CD8-positive, alpha-beta T cell (primary cell): ENCODE measurements at regions of chr3 and their contacts with region 1.

Region 1: DNA sequence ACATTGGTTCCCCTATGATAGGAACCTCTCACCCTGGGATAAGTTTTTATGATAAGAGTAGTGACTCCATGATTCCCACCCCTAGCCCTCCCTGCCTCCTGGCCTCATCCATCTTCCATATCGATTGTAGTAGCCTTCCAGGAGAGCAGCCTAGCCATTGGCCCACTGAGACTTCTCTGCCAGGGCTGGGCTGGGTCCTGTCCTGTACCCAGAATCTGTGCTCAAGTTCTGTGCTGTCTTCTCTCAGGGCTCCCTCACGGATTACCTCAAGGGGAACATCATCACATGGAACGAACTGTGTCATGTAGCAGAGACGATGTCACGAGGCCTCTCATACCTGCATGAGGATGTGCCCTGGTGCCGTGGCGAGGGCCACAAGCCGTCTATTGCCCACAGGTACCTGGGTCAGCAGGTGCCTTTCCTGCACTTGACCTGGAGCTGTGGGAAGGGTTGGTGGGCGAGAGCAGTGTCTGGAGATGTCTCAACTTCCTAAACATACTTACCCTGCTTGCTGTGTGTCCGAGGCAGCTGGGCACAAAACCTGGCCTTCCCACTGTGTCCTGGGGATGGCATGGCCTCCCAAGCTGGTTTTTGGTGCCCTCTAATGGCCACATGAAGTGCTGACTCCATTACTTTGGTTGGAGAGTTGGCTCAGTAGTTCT is 16.6 kb upstream of the EXOG start:
- DNase-seq: peak in 7 of 9 experiments; percentile 18 to 72 (median 48)
- ATAC-seq: peak; percentile 55
- H3K4me3 ChIP-seq: no peak overlapping the region
- H3K4me3 Mint-ChIP-seq: no peak overlapping the region
- H3K27ac ChIP-seq: no peak overlapping the region
- H3K27ac Mint-ChIP-seq: no peak overlapping the region
- H3K4me1 ChIP-seq: no peaks in the 10 kb centered on the region
- H3K4me1 Mint-ChIP-seq: peaks cover 2% of the 10 kb centered on the region
- H3K27me3 ChIP-seq: no peaks in the 10 kb centered on the region
- H3K27me3 Mint-ChIP-seq: no peaks in the 10 kb centered on the region
- CTCF ChIP-seq: peak; percentile 75

Region 2: GRCh38 chr3:37855363-37855970 is 624.1 kb before region 1 on chr3:
- CTCF ChIA-PET with region 1: interaction called, 3 read pairs
- POLR2A ChIA-PET with region 1: no interaction called
- intact Hi-C with region 1: loop called in 1 of 2 experiments (anchors 5 kb)
- DNase-seq: peak; percentile 41 to 85 (median 70)
- ATAC-seq: peak; percentile 57
- H3K4me3 ChIP-seq: no peak overlapping the region
- H3K4me3 Mint-ChIP-seq: no peak overlapping the region
- H3K27ac ChIP-seq: no peak overlapping the region
- H3K27ac Mint-ChIP-seq: no peak overlapping the region
- H3K4me1 ChIP-seq: peaks cover 8% of the 10 kb centered on the region
- H3K4me1 Mint-ChIP-seq: peaks cover 3% of the 10 kb centered on the region
- H3K27me3 ChIP-seq: no peaks in the 10 kb centered on the region
- H3K27me3 Mint-ChIP-seq: peaks cover 5% of the 10 kb centered on the region
- CTCF ChIP-seq: peak; percentile 86

Region 3: DNA sequence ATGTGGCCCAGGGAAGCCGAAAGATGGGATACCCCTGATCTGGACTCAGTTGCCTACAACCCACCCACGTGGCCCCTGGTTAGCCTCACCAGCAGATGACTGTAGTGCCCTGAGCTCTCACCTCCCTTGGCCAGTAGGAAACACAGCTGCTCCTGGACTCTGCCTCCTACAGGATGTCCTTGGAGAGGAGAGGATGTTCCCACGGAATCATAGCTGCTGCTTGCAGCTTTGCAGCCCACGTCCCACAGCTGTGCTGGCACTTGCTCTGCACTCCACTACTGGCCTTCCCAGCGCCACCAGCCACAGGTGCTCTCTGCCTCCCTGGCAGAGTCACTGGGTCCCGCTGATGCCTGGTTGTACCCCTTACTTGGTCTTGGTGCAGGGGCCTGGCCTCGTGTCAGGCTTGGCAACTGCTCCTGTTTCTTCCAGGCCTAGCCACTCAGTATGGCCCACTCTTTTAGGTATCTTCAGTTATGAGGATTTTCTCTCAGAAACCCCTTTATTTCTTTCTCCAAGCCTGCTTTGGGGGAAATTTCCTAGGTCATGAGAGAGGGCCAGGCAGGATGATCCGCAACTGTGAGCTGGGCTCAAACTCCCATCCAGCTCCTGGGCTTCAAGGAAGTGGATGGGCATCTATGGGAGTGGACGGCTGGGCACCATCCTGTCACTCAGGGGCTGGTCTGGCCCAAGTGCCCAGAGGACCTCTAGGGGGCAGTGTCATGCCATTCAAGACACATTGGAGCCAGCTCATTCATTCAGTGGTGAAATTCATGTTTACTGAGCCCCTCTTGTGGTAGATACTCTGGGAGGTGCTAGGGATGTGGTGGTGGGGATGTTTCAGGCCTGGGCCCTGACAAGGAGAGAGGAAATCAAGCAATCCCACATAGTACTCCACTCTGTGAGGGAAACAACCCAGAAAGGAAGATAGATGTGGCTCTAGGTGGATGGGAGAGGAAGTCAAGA is 505.2 kb before region 1 on chr3:
- CTCF ChIA-PET with region 1: interaction called, 5 read pairs
- POLR2A ChIA-PET with region 1: no interaction called
- intact Hi-C with region 1: loop called (anchors 1 to 5 kb)
- DNase-seq: peak; percentile 42 to 84 (median 72)
- ATAC-seq: peak; percentile 99
- H3K4me3 ChIP-seq: no peak overlapping the region
- H3K4me3 Mint-ChIP-seq: no peak overlapping the region
- H3K27ac ChIP-seq: no peak overlapping the region
- H3K27ac Mint-ChIP-seq: no peak overlapping the region
- H3K4me1 ChIP-seq: peaks cover 3% of the 10 kb centered on the region
- H3K4me1 Mint-ChIP-seq: peaks cover 4% of the 10 kb centered on the region
- H3K27me3 ChIP-seq: no peaks in the 10 kb centered on the region
- H3K27me3 Mint-ChIP-seq: no peaks in the 10 kb centered on the region
- CTCF ChIP-seq: peak; percentile 82

Region 4: GRCh38 chr3:38368238-38368637 is 111.3 kb before region 1 on chr3:
- CTCF ChIA-PET with region 1: interaction called, 22 read pairs
- POLR2A ChIA-PET with region 1: no interaction called
- intact Hi-C with region 1: no loop called
- DNase-seq: no peak
- ATAC-seq: no peak
- H3K4me3 ChIP-seq: no peak overlapping the region
- H3K4me3 Mint-ChIP-seq: no peak overlapping the region
- H3K27ac ChIP-seq: no peak overlapping the region
- H3K27ac Mint-ChIP-seq: no peak overlapping the region
- H3K4me1 ChIP-seq: peaks cover 5% of the 10 kb centered on the region
- H3K4me1 Mint-ChIP-seq: peaks cover 13% of the 10 kb centered on the region
- H3K27me3 ChIP-seq: no peaks in the 10 kb centered on the region
- H3K27me3 Mint-ChIP-seq: no peaks in the 10 kb centered on the region
- CTCF ChIP-seq: no peak

Region 5: DNA sequence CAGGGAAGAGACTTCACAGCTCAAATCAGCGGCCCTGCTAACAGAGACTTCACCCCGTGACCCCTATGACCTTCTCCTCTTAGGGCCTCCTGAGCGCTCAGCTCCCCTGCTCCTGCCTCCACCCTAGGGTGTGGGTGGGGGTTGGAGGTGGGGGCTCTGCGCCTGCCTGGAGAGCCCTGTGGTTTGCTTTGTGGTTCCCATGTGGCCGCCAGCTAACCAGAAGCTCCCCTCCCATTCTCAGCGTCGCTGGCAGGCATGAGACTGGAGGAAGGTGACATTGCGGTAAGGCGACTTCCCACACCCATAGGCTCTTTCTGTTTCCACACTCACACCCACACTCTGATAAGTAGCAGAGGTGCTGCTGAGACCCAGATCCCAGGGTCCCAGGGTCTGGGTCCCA is 105.3 kb before region 1 on chr3:
- CTCF ChIA-PET with region 1: interaction called, 22 read pairs
- POLR2A ChIA-PET with region 1: no interaction called
- intact Hi-C with region 1: no loop called
- DNase-seq: peak in 7 of 9 experiments; percentile 6 to 60 (median 31)
- ATAC-seq: peak; percentile 44
- H3K4me3 ChIP-seq: peak overlapping the region in 1 of 2 experiments; percentile 18
- H3K4me3 Mint-ChIP-seq: peak overlapping the region; percentile 66
- H3K27ac ChIP-seq: no peak overlapping the region
- H3K27ac Mint-ChIP-seq: peak overlapping the region; percentile 57
- H3K4me1 ChIP-seq: peaks cover 26% of the 10 kb centered on the region
- H3K4me1 Mint-ChIP-seq: peaks cover 28% of the 10 kb centered on the region
- H3K27me3 ChIP-seq: no peaks in the 10 kb centered on the region
- H3K27me3 Mint-ChIP-seq: no peaks in the 10 kb centered on the region
- CTCF ChIP-seq: no peak

Region 6: DNA sequence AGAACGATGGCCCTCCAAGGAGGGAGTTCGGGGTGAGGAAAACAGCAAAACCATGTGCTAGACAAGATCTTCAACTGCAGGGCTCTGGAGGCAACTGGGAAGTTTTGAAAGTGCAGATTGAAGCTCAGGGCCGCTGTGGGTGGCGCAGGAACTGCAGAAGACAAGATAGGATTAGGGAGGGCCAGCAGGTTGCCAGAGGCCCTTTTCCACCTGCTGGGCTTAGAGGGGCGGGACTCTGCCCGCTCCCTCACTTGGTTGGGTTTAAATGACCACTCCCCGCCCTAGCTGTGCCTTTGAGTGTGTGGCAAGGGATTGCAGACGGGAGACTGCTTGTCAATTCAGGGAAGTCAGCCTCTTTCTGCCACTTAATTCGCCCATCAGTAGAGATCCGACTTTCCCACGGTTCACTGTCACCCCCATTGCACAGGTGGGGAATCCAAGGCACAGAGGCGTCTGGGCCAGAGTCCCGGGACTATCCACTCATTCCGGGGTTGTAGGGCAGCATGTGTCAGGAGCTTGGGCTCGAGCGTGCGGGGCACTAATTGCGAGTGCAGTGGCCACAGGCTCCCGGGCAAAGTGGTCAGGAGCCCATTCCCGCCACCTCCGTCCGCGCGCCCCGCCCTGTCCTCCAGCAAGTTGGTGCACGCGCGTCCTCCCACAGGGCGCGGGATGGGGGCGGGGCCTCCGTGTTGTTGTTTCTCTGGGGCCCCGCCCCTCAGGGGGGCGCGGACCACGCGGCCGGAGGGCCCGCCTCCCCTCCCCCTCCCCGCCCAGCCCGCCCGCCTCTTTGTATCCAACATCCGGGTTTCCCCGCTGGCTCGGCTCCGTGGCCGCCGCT is 26.3 kb before region 1 on chr3 and contains the start of gene ACVR2B:
- CTCF ChIA-PET with region 1: interaction called, 11 read pairs
- POLR2A ChIA-PET with region 1: no interaction called
- intact Hi-C with region 1: no loop called
- DNase-seq: peak; percentile 15 to 82 (median 66)
- ATAC-seq: peak; percentile 62
- H3K4me3 ChIP-seq: peak within 1 kb of the TSS; percentile 55 to 62
- H3K4me3 Mint-ChIP-seq: peak within 1 kb of the TSS; percentile 98
- H3K27ac ChIP-seq: peak within 1 kb of the TSS in 1 of 2 experiments; percentile 32
- H3K27ac Mint-ChIP-seq: peak within 1 kb of the TSS; percentile 92
- H3K4me1 ChIP-seq: peaks cover 18% of the 10 kb centered on the region
- H3K4me1 Mint-ChIP-seq: peaks cover 30% of the 10 kb centered on the region
- H3K27me3 ChIP-seq: peaks cover 0 to 3% of the 10 kb centered on the region in 2 experiments
- H3K27me3 Mint-ChIP-seq: no peaks in the 10 kb centered on the region
- CTCF ChIP-seq: no peak
- total RNA-seq, gene ACVR2B: 2.1 to 3.0 TPM

Region 7: DNA sequence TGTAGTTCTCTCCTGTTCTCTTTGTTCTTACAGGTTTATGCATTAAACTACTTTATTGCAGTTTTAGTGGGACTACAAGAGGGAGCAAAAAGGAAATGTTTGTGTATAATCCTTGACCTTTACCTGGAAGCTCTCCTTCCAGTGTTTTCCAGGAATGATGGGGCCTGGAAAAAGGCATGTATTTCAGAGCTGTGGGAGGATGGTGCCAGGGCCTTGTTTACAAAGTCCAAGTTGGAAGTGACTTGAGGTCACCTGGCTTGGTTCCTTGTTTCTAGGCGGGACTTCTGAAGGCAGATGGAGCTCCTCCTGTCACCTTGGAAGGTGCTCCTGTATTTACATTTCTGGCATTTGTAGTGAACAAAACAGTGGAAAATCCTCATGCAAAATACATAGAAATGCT is 10.8 kb before region 1 on chr3:
- CTCF ChIA-PET with region 1: interaction called, 11 read pairs
- POLR2A ChIA-PET with region 1: no interaction called
- intact Hi-C with region 1: no loop called
- DNase-seq: no peak
- ATAC-seq: no peak
- H3K4me3 ChIP-seq: no peak overlapping the region
- H3K4me3 Mint-ChIP-seq: no peak overlapping the region
- H3K27ac ChIP-seq: no peak overlapping the region
- H3K27ac Mint-ChIP-seq: no peak overlapping the region
- H3K4me1 ChIP-seq: no peaks in the 10 kb centered on the region
- H3K4me1 Mint-ChIP-seq: peaks cover 24% of the 10 kb centered on the region
- H3K27me3 ChIP-seq: no peaks in the 10 kb centered on the region
- H3K27me3 Mint-ChIP-seq: no peaks in the 10 kb centered on the region
- CTCF ChIP-seq: no peak

Region 8: DNA sequence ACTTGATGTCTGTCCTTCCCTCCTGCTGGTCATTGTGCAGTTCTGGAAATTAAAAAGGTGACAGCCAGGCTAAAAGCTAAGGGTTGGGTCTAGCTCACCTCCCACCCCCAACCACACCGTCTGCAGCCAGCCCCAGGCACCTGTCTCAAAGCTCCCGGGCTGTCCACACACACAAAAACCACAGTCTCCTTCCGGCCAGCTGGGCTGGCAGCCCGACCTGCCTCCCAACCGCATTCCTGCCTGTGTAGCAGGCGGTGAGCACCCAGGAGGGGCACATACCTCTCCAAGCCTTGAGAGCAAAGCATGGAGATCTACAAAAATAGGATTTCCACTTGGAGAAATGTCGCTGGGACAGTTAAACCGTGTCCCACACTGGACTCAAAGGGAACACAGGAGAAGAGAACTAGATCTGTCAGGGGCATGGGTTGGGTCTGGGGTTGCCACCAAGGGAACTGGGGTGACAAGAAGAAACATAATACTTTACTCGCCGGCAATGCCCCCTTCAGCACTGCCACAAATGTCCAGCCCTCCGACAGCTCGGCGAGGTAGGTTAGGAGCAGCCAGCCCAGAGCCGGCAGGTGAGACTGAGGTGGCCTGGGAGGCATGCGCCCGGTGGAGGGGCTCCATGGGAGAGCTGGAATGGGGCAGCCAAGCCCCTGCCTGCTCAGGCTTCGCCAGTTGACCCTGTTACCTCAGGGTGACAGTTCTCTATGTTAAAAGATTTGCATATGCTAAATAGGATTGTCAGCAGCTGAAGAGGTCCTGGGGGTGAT is 68.8 kb after region 1 on chr3:
- CTCF ChIA-PET with region 1: no interaction called
- POLR2A ChIA-PET with region 1: no interaction called
- intact Hi-C with region 1: no loop called
- DNase-seq: peak in 1 of 9 experiments; percentile 38
- ATAC-seq: no peak
- H3K4me3 ChIP-seq: no peak overlapping the region
- H3K4me3 Mint-ChIP-seq: no peak overlapping the region
- H3K27ac ChIP-seq: no peak overlapping the region
- H3K27ac Mint-ChIP-seq: no peak overlapping the region
- H3K4me1 ChIP-seq: no peaks in the 10 kb centered on the region
- H3K4me1 Mint-ChIP-seq: no peaks in the 10 kb centered on the region
- H3K27me3 ChIP-seq: no peaks in the 10 kb centered on the region
- H3K27me3 Mint-ChIP-seq: no peaks in the 10 kb centered on the region
- CTCF ChIP-seq: no peak